GM10248 (cell line): ENCODE measurements at regions of chr12 and their contacts with region 1.

Region 1: GRCh38 chr12:110165540-110166159 is 41.5 kb downstream of the IFT81 start:
- DNase-seq: peak; percentile 32
- CTCF ChIP-seq: no peak

Region 2: DNA sequence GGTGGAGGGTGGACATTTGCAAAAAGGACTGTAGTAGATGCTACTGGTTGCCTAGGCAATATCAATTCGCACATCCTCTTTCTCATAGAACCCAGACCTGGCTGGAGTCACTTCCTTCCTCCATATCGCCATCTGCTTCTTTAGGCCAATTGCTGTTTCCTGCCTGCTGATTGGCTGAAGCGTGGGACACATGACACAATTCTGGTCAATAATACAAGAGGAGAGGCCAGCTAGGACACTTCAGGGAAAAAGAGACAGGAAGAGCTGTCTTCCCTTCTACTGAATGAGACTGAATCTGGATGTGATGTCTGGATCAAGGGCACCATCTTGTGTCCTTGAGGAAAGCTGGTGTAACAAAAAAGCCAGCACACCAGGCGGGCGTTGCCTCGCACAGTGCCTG is 386.3 kb before region 1 on chr12:
- CTCF ChIA-PET with region 1: no interaction called
- POLR2A ChIA-PET with region 1: no interaction called
- DNase-seq: no peak
- CTCF ChIP-seq: no peak

Region 3: DNA sequence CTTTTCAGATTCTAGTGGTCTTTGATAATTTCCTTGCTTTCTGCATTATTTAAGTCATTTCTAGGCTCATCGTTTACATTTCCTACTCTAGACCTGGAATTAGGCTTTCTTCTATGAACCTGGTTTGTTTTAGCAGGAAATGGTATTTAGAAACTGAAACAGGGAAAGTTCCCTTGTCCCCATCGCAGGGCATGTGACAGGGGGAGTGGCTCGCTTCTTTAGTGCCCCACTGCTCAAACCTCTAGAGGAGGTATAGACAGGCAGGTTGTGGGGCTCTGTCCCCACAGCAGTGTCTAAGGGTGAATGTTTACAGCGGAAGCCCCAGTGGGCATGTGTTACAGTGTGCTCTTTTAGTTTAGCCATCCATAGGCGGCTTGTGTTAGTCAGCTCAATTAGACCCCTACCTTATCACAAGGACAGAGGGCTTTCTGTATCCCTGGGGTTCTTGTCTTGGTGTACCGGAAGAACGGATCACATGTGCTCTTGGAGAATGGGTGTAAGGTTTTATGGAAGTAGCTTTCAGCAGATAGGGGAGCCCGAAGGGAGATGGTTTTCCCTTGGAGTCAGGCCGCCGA is 16.5 kb before region 1 on chr12:
- CTCF ChIA-PET with region 1: interaction called, 10 read pairs
- POLR2A ChIA-PET with region 1: no interaction called
- DNase-seq: no peak
- CTCF ChIP-seq: no peak

Region 4: GRCh38 chr12:110197003-110197402 is 31.4 kb after region 1 on chr12:
- CTCF ChIA-PET with region 1: no interaction called
- POLR2A ChIA-PET with region 1: no interaction called
- DNase-seq: no peak
- CTCF ChIP-seq: no peak

Region 5: DNA sequence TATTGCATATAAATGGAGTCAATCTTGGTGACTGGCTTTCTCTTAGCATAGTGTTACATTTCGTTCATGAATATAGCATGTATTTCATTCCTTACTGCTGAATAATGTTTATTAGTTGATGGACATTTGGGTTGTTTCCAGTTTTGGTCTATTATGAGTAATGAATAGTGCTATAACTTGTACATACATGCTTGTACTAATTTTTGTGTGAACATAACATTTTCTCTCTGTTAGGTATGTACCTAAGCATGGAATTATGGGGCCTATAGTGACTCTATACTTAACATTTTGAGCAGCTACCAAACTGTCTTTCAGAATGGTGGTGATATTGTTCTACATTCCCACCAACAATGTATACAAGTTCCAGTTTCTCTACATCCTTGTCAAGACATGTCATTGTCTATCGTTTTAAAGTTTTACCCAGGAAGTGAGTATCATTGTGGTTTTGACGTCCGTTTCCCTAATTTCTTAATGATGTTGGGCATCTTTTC is 138.5 kb after region 1 on chr12:
- CTCF ChIA-PET with region 1: no interaction called
- POLR2A ChIA-PET with region 1: no interaction called
- DNase-seq: no peak
- CTCF ChIP-seq: no peak

Region 6: GRCh38 chr12:110468212-110469048 is 302.8 kb after region 1 on chr12 and contains the starts of genes FAM216A and GPN3:
- CTCF ChIA-PET with region 1: no interaction called
- POLR2A ChIA-PET with region 1: no interaction called
- DNase-seq: peak; percentile 96
- CTCF ChIP-seq: no peak